ENCODE measurements at regions of chr1 and their contacts with region 1.

Region 1: GRCh38 chr1:25572708-25573600 is 29.5 kb downstream of the LDLRAP1 start:
- DNase-seq: peak; percentile 78
- ATAC-seq: peak; percentile 79
- H3K4me3 Mint-ChIP-seq: no peak overlapping the region
- H3K27ac Mint-ChIP-seq: no peak overlapping the region
- H3K4me1 Mint-ChIP-seq: peaks cover 48% of the 10 kb centered on the region
- H3K27me3 Mint-ChIP-seq: no peaks in the 10 kb centered on the region
- CTCF ChIP-seq: peak; percentile 82

Region 2: DNA sequence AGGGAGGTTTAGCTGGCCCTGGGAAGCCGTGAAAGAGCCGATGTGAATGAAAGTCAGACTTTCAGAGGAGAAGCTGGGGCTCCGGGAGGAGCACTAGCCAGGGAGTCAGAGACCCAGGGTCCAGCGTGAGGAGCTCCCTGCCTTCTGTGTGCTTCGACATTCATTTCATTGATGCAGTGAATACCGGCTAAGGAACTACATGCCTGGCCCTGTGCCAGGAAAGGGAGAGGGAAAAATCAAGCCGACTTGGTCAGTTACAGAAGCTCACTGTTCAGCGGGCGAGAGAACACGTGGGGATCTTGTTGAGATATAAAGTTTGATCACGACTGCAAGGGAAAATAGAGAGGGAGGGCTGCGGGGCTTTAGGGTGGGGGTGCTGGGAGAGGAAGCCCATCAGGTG is 566.2 kb before region 1 on chr1:
- CTCF ChIA-PET with region 1: no interaction called
- POLR2A ChIA-PET with region 1: no interaction called
- intact Hi-C with region 1: loop called (anchors 10 kb)
- DNase-seq: no peak
- ATAC-seq: no peak
- H3K4me3 Mint-ChIP-seq: no peak overlapping the region
- H3K27ac Mint-ChIP-seq: peak overlapping the region; percentile 74
- H3K4me1 Mint-ChIP-seq: peaks cover 86% of the 10 kb centered on the region
- H3K27me3 Mint-ChIP-seq: no peaks in the 10 kb centered on the region
- CTCF ChIP-seq: no peak

Region 3: GRCh38 chr1:25549273-25550154 is 23.4 kb before region 1 on chr1:
- CTCF ChIA-PET with region 1: interaction called, 13 read pairs
- POLR2A ChIA-PET with region 1: interaction called, 43 read pairs
- intact Hi-C with region 1: no loop called
- DNase-seq: peak; percentile 96
- ATAC-seq: peak; percentile 94
- H3K4me3 Mint-ChIP-seq: peak overlapping the region; percentile 45
- H3K27ac Mint-ChIP-seq: peak overlapping the region; percentile 88
- H3K4me1 Mint-ChIP-seq: peaks cover 85% of the 10 kb centered on the region
- H3K27me3 Mint-ChIP-seq: no peaks in the 10 kb centered on the region
- CTCF ChIP-seq: no peak

Measured in activated CD8-positive, alpha-beta T cell treated with anti-CD3 and anti-CD28 coated beads for 36 hours (primary cell).